PC-3 (cell line): ENCODE measurements at regions of chr7 and their contacts with region 1.

Region 1: DNA sequence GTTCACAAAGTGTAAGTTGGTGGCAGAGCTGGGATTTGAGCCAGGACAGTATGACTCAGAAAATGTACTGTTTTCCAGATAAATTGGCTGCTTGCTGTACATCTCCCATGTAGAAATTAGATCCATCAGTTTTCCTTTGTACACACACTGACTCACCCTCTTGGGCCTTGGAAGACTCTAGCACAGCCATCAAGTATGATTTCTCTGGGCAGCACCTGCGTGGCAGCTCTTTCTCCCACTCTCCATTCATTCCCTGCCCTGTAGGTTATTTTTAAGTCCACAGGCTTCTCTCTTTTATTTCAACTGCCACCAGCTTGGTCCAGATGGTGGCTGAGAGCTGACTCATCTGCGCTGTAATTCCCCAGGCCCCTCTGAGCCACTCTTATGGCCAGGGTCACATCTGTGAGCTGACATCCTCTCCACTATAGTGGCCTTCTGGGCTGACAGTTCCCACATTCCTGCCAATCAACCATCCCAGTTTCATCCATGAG is 28.3 kb upstream of the SDK1 start:
- DNase-seq: peak; percentile 93
- ATAC-seq: peak; percentile 90
- H3K4me3 ChIP-seq: no peak overlapping the region
- H3K27ac ChIP-seq: peak overlapping the region; percentile 33
- H3K4me1 ChIP-seq: peaks cover 21% of the 10 kb centered on the region
- H3K27me3 ChIP-seq: no peaks in the 10 kb centered on the region
- CTCF ChIP-seq: no peak

Region 2: DNA sequence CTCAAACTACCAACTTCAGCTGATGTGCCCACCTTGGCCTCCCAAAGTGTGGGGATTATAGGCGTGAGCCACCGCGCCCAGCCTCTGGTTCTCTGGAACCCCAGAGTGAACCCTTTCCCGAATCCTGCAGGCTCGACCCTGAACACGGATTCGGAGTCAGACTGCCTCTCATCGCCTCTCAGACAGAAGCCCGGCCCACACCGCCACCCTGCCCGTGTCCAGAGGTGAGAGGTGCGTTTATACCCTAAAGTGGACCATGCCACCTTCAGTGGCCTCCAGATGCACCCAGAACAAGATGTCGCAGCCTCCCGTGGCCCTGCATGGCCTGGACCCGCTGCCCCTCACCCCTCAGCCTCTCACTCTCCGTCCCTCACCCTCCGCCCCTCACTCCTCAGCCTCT is 363.7 kb before region 1 on chr7:
- CTCF ChIA-PET with region 1: interaction called, 13 read pairs
- POLR2A ChIA-PET with region 1: no interaction called
- intact Hi-C with region 1: no loop called
- DNase-seq: no peak
- ATAC-seq: no peak
- H3K4me3 ChIP-seq: no peak overlapping the region
- H3K27ac ChIP-seq: no peak overlapping the region
- H3K4me1 ChIP-seq: no peaks in the 10 kb centered on the region
- H3K27me3 ChIP-seq: no peaks in the 10 kb centered on the region
- CTCF ChIP-seq: no peak

Region 3: DNA sequence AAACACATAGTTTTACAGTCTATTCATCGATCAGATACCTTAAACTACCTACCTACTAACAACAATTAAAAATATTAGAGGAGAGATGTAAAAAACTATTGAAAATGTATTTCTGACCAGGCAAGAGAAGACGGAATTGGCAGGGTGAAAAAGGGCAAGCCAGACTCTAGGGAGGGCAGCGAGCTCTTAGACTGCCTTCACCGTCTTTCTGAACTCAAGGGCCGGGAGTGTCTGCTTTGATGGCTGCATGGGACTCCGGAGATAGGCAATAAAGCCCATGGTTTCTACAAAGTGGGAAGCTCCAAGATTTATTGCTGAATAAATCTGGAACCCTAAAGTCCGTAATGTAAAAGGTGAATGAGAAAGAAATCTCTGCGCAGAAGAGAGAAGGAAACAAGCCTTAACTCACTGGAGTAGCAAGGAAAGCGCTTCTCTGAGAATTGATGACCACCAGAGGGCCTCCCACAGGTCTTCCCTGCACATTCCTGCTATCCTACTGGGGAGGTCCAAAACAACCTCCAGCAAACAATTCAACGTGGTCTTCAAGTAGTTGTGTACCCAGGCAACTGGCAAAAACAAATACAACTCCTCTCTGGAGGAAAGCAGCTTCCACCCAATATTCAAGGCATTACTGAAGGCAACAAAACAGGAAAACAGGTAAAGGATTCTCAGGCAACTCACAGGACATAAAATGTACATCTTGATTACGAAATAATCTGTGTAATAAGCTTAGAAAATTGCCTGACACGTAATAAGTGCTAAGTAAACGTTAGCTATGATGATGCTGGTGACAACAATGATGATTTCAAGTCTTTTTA is 209.6 kb after region 1 on chr7:
- CTCF ChIA-PET with region 1: no interaction called
- POLR2A ChIA-PET with region 1: no interaction called
- intact Hi-C with region 1: no loop called
- DNase-seq: peak; percentile 53
- ATAC-seq: peak; percentile 77
- H3K4me3 ChIP-seq: no peak overlapping the region
- H3K27ac ChIP-seq: no peak overlapping the region
- H3K4me1 ChIP-seq: no peaks in the 10 kb centered on the region
- H3K27me3 ChIP-seq: no peaks in the 10 kb centered on the region
- CTCF ChIP-seq: peak; percentile 77

Region 4: GRCh38 chr7:3559278-3559677 is 286.5 kb after region 1 on chr7:
- CTCF ChIA-PET with region 1: no interaction called
- POLR2A ChIA-PET with region 1: no interaction called
- intact Hi-C with region 1: no loop called
- DNase-seq: peak; percentile 79
- ATAC-seq: peak; percentile 80
- H3K4me3 ChIP-seq: no peak overlapping the region
- H3K27ac ChIP-seq: no peak overlapping the region
- H3K4me1 ChIP-seq: 0 out of 2 replicates have a peak, but pooled peaks cover 8% of the 10 kb centered on the region
- H3K27me3 ChIP-seq: no peaks in the 10 kb centered on the region
- CTCF ChIP-seq: no peak